Mammary epithelial cell (primary cell): ENCODE measurements at regions of chr22 and their contacts with region 1.

Region 1: GRCh38 chr22:20111045-20111688 is 4.7 kb upstream of the RANBP1 start:
- DNase-seq: no peak
- H3K4me3 ChIP-seq: no peak overlapping the region
- H3K27ac ChIP-seq: no peak overlapping the region
- H3K4me1 ChIP-seq: peaks cover 8% of the 10 kb centered on the region
- H3K27me3 ChIP-seq: no peaks in the 10 kb centered on the region
- CTCF ChIP-seq: peak; percentile 34 to 38

Region 2: GRCh38 chr22:20044495-20045151 is 66.5 kb before region 1 on chr22:
- CTCF ChIA-PET with region 1: no interaction called
- dilution Hi-C with region 1: loop called (anchors 5 kb)
- in situ Hi-C with region 1: no loop called
- intact Hi-C with region 1: no loop called
- DNase-seq: no peak
- H3K4me3 ChIP-seq: no peak overlapping the region
- H3K27ac ChIP-seq: no peak overlapping the region
- H3K4me1 ChIP-seq: no peaks in the 10 kb centered on the region
- H3K27me3 ChIP-seq: no peaks in the 10 kb centered on the region
- CTCF ChIP-seq: no peak

Region 3: GRCh38 chr22:20156611-20157429 is 45.7 kb after region 1 on chr22:
- CTCF ChIA-PET with region 1: no interaction called
- dilution Hi-C with region 1: no loop called
- in situ Hi-C with region 1: no loop called
- intact Hi-C with region 1: no loop called
- DNase-seq: peak; percentile 46
- H3K4me3 ChIP-seq: no peak overlapping the region
- H3K27ac ChIP-seq: no peak overlapping the region
- H3K4me1 ChIP-seq: peaks cover 9% of the 10 kb centered on the region
- H3K27me3 ChIP-seq: no peaks in the 10 kb centered on the region
- CTCF ChIP-seq: peak; percentile 91 to 98